HepG2 (cell line): ENCODE measurements at regions of chr3 and their contacts with region 1.

Region 1: DNA sequence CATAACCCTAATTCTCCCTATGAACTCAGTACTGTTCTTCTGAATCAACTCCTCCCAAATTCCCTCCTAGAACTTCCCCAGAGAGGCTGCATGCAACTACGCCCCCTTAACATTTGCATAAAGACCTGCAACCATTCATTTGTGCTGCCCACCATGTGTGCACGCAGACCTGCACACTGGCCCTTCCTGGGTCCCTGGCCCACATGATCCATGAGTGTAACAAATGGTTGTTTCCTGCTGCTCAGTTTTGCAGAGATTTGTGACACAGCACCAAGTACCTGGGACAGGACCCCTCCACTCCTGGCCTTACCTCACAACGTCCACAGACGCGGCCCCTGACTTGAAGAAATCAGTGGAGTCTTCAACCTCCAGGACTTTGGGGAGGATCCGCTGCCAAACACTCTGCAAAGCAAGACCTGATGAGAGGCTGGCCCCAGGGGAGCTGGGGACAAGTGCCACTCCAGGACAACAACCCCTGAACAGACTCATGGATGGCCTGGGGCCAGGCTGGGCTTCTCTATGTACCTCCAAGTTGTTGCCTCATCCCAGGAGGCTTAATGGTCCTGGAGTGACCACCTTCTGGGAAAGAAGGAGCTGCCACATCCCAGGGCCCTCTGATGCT is 33.8 kb downstream of the ALDH1L1 start:
- DNase-seq: no peak
- ATAC-seq: no peak; the same call in 2 of the 3 replicates
- H3K4me3 ChIP-seq: no peak overlapping the region
- H3K27ac ChIP-seq: no peak overlapping the region
- H3K4me1 ChIP-seq: no peaks in the 10 kb centered on the region
- H3K27me3 ChIP-seq: no peaks in the 10 kb centered on the region
- CTCF ChIP-seq: no peak
- EP300 ChIP-seq: no peak
- POLR2A ChIP-seq: no peak
- RAD21 ChIP-seq: no peak

Region 2: GRCh38 chr3:126212602-126213378 is 66.2 kb after region 1 on chr3:
- CTCF ChIA-PET with region 1: no interaction called
- POLR2A ChIA-PET with region 1: no interaction called
- in situ Hi-C with region 1: loop called (anchors 5 kb)
- intact Hi-C with region 1: no loop called
- DNase-seq: peak; percentile 29
- ATAC-seq: peak; percentile 91
- H3K4me3 ChIP-seq: peak overlapping the region; percentile 64 to 72 (median 68)
- H3K27ac ChIP-seq: no peak overlapping the region
- H3K4me1 ChIP-seq: peaks cover 37% of the 10 kb centered on the region
- H3K27me3 ChIP-seq: peaks cover 2 to 43% of the 10 kb centered on the region in 2 experiments; a peak in 3 of 5 replicates
- CTCF ChIP-seq: peak; percentile 70
- EP300 ChIP-seq: no peak
- POLR2A ChIP-seq: no peak
- RAD21 ChIP-seq: peak; percentile 77

Region 3: DNA sequence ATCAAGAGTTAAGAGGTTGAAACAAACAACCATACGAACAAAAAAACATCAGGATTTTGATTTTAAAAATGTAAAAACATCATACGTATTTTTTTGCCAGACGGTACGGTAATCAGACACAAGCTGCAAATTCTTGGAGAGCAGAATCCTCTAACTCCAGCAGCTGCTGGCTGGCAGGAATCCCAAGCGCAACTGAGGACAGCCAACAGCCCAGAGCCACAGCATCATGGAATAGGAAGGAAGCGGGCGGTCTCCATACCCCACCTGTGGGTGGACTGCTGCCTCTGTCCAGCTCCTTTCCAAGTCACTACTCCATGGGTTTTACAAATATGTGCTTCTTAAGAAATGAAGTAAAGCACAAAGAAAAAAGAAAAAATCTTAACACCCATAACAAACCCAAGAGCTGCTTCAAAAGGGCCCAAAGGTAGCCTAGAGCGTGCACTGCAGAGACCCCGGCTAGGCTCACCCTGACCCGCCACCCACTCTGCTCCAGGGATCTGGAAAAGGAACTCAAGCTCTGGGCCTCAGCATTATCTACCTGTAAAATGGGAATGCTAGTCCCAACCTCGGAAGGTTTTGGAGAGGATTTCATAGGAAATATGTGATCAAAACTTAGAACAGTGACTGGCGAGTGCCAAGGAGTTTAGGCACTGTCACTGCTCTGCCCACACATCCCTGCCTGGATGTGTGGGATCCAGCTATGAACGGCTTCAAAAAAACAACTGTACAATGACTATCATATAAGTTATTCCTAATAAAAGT is 295.6 kb after region 1 on chr3:
- CTCF ChIA-PET with region 1: no interaction called
- POLR2A ChIA-PET with region 1: no interaction called
- in situ Hi-C with region 1: no loop called
- intact Hi-C with region 1: no loop called
- DNase-seq: no peak
- ATAC-seq: no peak
- H3K4me3 ChIP-seq: no peak overlapping the region
- H3K27ac ChIP-seq: no peak overlapping the region
- H3K4me1 ChIP-seq: peaks cover 17% of the 10 kb centered on the region
- H3K27me3 ChIP-seq: no peaks in the 10 kb centered on the region
- CTCF ChIP-seq: no peak
- EP300 ChIP-seq: no peak
- POLR2A ChIP-seq: no peak
- RAD21 ChIP-seq: no peak